ENCODE measurements at regions of chr18 and their contacts with region 1.

Region 1: DNA sequence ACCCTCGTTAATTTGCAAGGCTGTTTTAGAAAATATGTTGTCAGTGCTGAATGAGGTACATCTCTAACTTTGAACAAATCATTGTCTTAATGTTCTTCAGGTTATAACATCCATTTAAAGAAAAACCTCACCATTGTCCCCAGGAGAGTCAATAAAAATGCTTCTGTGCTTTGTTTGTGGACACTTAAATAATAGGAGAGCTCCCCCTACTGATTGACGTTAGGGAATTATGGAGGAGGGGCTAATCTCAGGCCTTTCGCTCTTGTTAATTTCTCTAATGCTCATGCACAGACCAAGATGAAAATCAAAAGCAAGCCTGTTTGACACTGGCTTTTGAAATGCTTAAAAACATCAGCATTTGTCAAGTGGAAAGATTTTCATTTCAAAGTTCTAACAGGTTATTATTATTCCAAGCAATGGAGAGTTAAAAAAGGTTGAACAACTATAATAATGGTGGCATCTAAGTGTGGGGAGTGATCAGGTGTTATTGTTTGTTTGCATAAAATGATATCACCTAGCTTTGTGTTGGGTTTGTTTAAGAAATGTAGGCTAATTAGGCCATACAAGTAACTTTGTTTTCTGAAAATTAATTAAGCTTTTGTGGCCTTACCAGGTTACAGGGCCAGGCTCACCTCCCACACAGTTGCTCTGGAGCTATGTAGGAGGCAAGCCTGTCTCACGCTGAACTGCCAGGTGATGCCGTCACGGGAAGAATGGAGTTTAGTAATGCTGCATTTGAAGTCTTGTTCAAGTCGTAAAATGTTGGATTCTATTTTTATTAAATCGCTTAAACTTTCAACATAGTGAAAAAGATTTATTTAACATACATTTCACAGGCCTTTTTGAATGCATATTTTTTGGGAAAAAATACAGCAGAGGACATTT is 51.7 kb upstream of the SMIM21 start:
- DNase-seq: peak; percentile 66
- H3K4me3 ChIP-seq: no peak overlapping the region
- H3K27ac ChIP-seq: no peak overlapping the region
- H3K4me1 ChIP-seq: peaks cover 4% of the 10 kb centered on the region
- H3K27me3 ChIP-seq: no peaks in the 10 kb centered on the region
- CTCF ChIP-seq: peak; percentile 48 to 55
- POLR2A ChIP-seq: no peak

Region 2: GRCh38 chr18:74652392-74652988 is 826.7 kb before region 1 on chr18:
- CTCF ChIA-PET with region 1: interaction called, 41 read pairs
- POLR2A ChIA-PET with region 1: no interaction called
- dilution Hi-C with region 1: no loop called
- intact Hi-C with region 1: loop called (anchors 1 kb)
- DNase-seq: peak; percentile 81
- H3K4me3 ChIP-seq: no peak overlapping the region
- H3K27ac ChIP-seq: peak overlapping the region; percentile 32
- H3K4me1 ChIP-seq: peaks cover 5% of the 10 kb centered on the region
- H3K27me3 ChIP-seq: no peaks in the 10 kb centered on the region
- CTCF ChIP-seq: peak; percentile 21 to 28
- POLR2A ChIP-seq: no peak

Region 3: GRCh38 chr18:74963820-74964446 is 515.3 kb before region 1 on chr18:
- CTCF ChIA-PET with region 1: interaction called, 7 read pairs
- POLR2A ChIA-PET with region 1: no interaction called
- dilution Hi-C with region 1: no loop called
- intact Hi-C with region 1: loop called (anchors 10 kb)
- DNase-seq: peak; percentile 62
- H3K4me3 ChIP-seq: no peak overlapping the region
- H3K27ac ChIP-seq: no peak overlapping the region
- H3K4me1 ChIP-seq: no peaks in the 10 kb centered on the region
- H3K27me3 ChIP-seq: no peaks in the 10 kb centered on the region
- CTCF ChIP-seq: peak; percentile 19 to 45
- POLR2A ChIP-seq: no peak

Region 4: GRCh38 chr18:75173125-75173432 is 306.2 kb before region 1 on chr18:
- CTCF ChIA-PET with region 1: interaction called, 6 read pairs
- POLR2A ChIA-PET with region 1: no interaction called
- dilution Hi-C with region 1: no loop called
- intact Hi-C with region 1: loop called (anchors 5 kb)
- DNase-seq: no peak
- H3K4me3 ChIP-seq: no peak overlapping the region
- H3K27ac ChIP-seq: no peak overlapping the region
- H3K4me1 ChIP-seq: no peaks in the 10 kb centered on the region
- H3K27me3 ChIP-seq: peaks cover 0 to 2% of the 10 kb centered on the region in 2 experiments
- CTCF ChIP-seq: no peak
- POLR2A ChIP-seq: no peak

Region 5: DNA sequence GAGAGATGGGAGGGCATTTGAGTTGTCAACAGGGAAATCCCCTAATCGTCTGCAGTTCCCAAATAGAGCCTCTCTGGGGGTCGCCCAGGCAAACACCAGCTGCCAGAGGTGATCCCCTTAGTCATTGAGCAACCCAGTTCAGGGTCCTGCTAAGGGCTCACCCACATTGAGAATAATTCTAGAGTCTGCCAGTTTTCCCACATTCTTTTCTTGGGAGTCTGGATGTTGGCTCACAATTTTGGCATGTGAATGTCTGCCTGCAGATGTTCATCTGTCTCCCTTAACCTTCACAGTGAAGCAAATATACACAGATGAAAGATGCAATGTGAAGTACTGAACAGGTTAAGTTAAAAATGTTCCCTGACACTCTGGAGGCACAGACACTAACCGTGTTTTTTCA is 40.3 kb before region 1 on chr18:
- CTCF ChIA-PET with region 1: no interaction called
- POLR2A ChIA-PET with region 1: no interaction called
- dilution Hi-C with region 1: no loop called
- intact Hi-C with region 1: no loop called
- DNase-seq: no peak
- H3K4me3 ChIP-seq: no peak overlapping the region
- H3K27ac ChIP-seq: no peak overlapping the region
- H3K4me1 ChIP-seq: no peaks in the 10 kb centered on the region
- H3K27me3 ChIP-seq: peaks cover 0 to 3% of the 10 kb centered on the region in 2 experiments
- CTCF ChIP-seq: no peak
- POLR2A ChIP-seq: no peak